ENCODE measurements at regions of chr10 and their contacts with region 1.

Region 1: GRCh38 chr10:28393966-28394568 is 91.2 kb upstream of the MPP7 start:
- DNase-seq: peak; percentile 79
- ATAC-seq: peak; percentile 95
- H3K4me3 Mint-ChIP-seq: no peak overlapping the region
- H3K27ac Mint-ChIP-seq: no peak overlapping the region
- H3K4me1 Mint-ChIP-seq: peaks cover 4% of the 10 kb centered on the region
- H3K27me3 Mint-ChIP-seq: peaks cover 5% of the 10 kb centered on the region

Region 2: DNA sequence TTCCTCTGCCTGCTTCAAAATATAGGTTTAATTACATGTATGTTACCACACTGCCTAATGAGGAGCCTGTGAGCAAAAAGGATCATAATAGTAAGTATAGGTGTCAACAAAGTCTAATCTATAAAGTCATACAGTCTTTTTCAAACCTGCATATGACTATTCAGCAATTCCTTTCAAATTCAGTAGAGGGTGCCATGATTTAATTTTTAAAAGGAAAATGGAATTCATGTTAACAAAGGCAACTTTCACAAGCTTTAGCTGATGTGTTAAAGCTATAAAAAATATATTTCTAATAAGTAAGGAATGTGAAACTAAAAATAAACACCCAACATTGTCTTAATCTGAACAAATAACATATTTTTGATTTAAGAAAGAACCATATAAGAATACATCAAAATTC is 143.3 kb before region 1 on chr10:
- CTCF ChIA-PET with region 1: interaction called, 33 read pairs
- POLR2A ChIA-PET with region 1: no interaction called
- DNase-seq: no peak
- ATAC-seq: no peak
- H3K4me3 Mint-ChIP-seq: no peak overlapping the region
- H3K27ac Mint-ChIP-seq: no peak overlapping the region
- H3K4me1 Mint-ChIP-seq: peaks cover 16% of the 10 kb centered on the region
- H3K27me3 Mint-ChIP-seq: no peaks in the 10 kb centered on the region

Region 3: GRCh38 chr10:28291881-28292297 is 102.2 kb before region 1 on chr10:
- CTCF ChIA-PET with region 1: interaction called, 20 read pairs
- POLR2A ChIA-PET with region 1: no interaction called
- DNase-seq: no peak
- ATAC-seq: no peak
- H3K4me3 Mint-ChIP-seq: no peak overlapping the region
- H3K27ac Mint-ChIP-seq: no peak overlapping the region
- H3K4me1 Mint-ChIP-seq: peaks cover 17% of the 10 kb centered on the region
- H3K27me3 Mint-ChIP-seq: no peaks in the 10 kb centered on the region